SK-N-SH (cell line): ENCODE measurements at regions of chr17 and their contacts with region 1.

Region 1: DNA sequence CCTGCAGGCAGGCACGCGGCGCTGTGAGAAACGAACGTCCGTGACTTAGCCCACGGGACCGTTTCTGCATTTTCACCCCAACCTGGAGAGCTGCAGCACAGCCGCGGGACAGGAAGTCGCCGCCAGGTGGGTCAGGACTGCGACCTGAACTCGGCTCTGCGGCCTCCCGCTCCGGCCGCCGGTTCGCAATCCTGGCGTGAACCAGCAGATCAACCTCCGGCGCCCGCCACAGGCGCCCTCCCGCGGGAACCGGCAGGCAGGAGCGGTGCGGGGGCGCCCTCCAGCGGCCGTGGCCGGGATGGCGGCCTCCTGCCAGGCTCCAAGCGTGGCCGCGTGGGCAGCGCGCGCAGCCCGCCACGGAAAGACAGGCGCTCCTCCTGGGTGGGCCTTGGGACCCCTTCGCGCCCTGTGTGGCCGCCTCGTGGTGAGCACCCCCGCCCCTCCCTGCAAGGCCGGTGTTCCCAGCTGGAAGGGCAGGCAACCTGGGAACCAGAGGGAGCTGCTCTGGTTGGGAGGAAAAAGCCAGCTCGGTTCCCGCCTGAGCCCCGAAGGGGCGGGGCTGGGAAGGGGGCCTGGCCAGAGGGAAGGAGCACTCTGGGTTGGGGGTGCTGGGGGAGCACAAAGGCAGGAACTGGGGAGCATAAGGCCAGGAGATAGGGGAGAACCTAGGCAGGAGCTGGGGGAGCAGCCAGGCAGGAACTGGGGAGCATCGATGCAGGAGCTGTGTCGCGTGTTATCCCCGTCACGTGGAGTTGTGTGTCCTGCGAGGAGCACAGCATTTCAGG is 28.2 kb downstream of the ACTG1 start:
- DNase-seq: peak; percentile 97
- H3K4me3 ChIP-seq: peak overlapping the region; percentile 36 to 61
- H3K27ac ChIP-seq: no peak overlapping the region
- H3K4me1 ChIP-seq: peaks cover 6 to 51% of the 10 kb centered on the region in 2 experiments; a peak in 2 of 4 replicates
- H3K27me3 ChIP-seq: no peaks in the 10 kb centered on the region
- CTCF ChIP-seq: peak; percentile 95
- EP300 ChIP-seq: no peak
- RAD21 ChIP-seq: peak; percentile 98

Region 2: GRCh38 chr17:81322271-81323082 is 161.9 kb before region 1 on chr17:
- CTCF ChIA-PET with region 1: interaction called, 13 read pairs
- POLR2A ChIA-PET with region 1: no interaction called
- DNase-seq: peak; percentile 94
- H3K4me3 ChIP-seq: no peak overlapping the region
- H3K27ac ChIP-seq: peak overlapping the region in 1 of 2 experiments; percentile 83; a peak in 1 of 4 replicates
- H3K4me1 ChIP-seq: peaks cover 0 to 49% of the 10 kb centered on the region in 2 experiments; a peak in 1 of 4 replicates
- H3K27me3 ChIP-seq: no peaks in the 10 kb centered on the region
- CTCF ChIP-seq: peak; percentile 56
- EP300 ChIP-seq: no peak
- RAD21 ChIP-seq: peak; percentile 43

Region 3: DNA sequence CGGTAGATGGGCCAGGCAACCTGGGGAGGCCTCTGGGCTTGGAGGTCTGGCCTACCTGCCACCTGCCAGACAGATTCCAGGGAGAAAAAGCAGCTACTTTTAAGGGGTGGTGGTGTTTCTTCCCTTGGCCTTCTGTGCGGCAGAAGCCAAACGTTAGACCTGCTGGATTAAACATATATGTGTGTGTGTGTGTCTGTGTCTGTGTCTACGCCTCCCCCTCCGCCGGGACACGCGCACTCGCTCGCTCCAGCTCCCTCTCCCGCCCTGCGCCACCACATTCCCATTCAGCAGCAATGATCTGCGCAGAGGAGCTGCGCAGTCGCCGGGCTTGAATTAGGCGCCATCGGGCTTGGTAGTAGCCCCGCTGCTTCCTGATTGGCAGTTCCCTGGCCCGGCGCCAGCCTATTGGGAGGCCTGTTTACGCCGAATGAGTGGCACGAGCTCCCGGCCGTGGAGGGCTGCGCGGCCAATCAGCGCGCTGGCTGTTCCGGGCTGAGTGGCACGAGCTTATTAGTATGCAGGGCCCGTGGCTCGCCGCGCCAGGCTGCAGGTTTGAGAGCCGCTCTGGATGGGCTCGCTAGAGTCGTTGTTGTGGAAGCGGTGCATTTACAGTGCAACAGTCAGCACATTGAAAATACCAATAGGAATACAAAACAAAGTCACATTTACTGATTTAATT is 89.3 kb before region 1 on chr17 and contains the start of gene BAHCC1:
- CTCF ChIA-PET with region 1: interaction called, 60 read pairs
- POLR2A ChIA-PET with region 1: interaction called, 4 read pairs
- DNase-seq: peak; percentile 97
- H3K4me3 ChIP-seq: peak within 1 kb of the TSS; percentile 60 to 80
- H3K27ac ChIP-seq: peak within 1 kb of the TSS; percentile 83 to 89
- H3K4me1 ChIP-seq: peaks cover 31 to 68% of the 10 kb centered on the region in 2 experiments
- H3K27me3 ChIP-seq: no peaks in the 10 kb centered on the region
- CTCF ChIP-seq: no peak
- EP300 ChIP-seq: peak in 1 of 2 experiments; percentile 51; a peak in 1 of 4 replicates
- RAD21 ChIP-seq: no peak; the same call in 1 of the 2 replicates
- polyA plus RNA-seq, gene BAHCC1: 3.6 and 6.4 TPM in 2 replicates

Region 4: GRCh38 chr17:81428948-81429774 is 55.2 kb before region 1 on chr17:
- CTCF ChIA-PET with region 1: interaction called, 43 read pairs
- POLR2A ChIA-PET with region 1: no interaction called
- DNase-seq: peak; percentile 97
- H3K4me3 ChIP-seq: peak overlapping the region in 1 of 2 experiments; percentile 4; a peak in 1 of 4 replicates
- H3K27ac ChIP-seq: peak overlapping the region; percentile 15 to 78; a peak in 3 of 4 replicates
- H3K4me1 ChIP-seq: peaks cover 21 to 51% of the 10 kb centered on the region in 2 experiments; a peak in 3 of 4 replicates
- H3K27me3 ChIP-seq: no peaks in the 10 kb centered on the region
- CTCF ChIP-seq: no peak
- EP300 ChIP-seq: peak in 1 of 2 experiments; percentile 82; a peak in 3 of 4 replicates
- RAD21 ChIP-seq: no peak

Region 5: GRCh38 chr17:81471804-81472456 is 12.5 kb before region 1 on chr17:
- CTCF ChIA-PET with region 1: interaction called, 41 read pairs
- POLR2A ChIA-PET with region 1: no interaction called
- DNase-seq: peak; percentile 97
- H3K4me3 ChIP-seq: peak overlapping the region in 1 of 2 experiments; percentile 7; a peak in 1 of 4 replicates
- H3K27ac ChIP-seq: peak overlapping the region in 1 of 2 experiments; percentile 31; a peak in 2 of 4 replicates
- H3K4me1 ChIP-seq: peaks cover 0 to 17% of the 10 kb centered on the region in 2 experiments; a peak in 1 of 4 replicates
- H3K27me3 ChIP-seq: no peaks in the 10 kb centered on the region
- CTCF ChIP-seq: no peak
- EP300 ChIP-seq: 0 out of 4 replicates have a peak, but pooled peaks of 1 of the 2 experiments have one; percentile 12
- RAD21 ChIP-seq: peak; percentile 43

Region 6: GRCh38 chr17:81537343-81537855 is 53.0 kb after region 1 on chr17:
- CTCF ChIA-PET with region 1: interaction called, 15 read pairs
- POLR2A ChIA-PET with region 1: no interaction called
- DNase-seq: peak; percentile 92
- H3K4me3 ChIP-seq: no peak overlapping the region
- H3K27ac ChIP-seq: no peak overlapping the region
- H3K4me1 ChIP-seq: peaks cover 0 to 35% of the 10 kb centered on the region in 2 experiments; a peak in 1 of 4 replicates
- H3K27me3 ChIP-seq: no peaks in the 10 kb centered on the region
- CTCF ChIP-seq: peak; percentile 60
- EP300 ChIP-seq: no peak
- RAD21 ChIP-seq: peak; percentile 80

Region 7: DNA sequence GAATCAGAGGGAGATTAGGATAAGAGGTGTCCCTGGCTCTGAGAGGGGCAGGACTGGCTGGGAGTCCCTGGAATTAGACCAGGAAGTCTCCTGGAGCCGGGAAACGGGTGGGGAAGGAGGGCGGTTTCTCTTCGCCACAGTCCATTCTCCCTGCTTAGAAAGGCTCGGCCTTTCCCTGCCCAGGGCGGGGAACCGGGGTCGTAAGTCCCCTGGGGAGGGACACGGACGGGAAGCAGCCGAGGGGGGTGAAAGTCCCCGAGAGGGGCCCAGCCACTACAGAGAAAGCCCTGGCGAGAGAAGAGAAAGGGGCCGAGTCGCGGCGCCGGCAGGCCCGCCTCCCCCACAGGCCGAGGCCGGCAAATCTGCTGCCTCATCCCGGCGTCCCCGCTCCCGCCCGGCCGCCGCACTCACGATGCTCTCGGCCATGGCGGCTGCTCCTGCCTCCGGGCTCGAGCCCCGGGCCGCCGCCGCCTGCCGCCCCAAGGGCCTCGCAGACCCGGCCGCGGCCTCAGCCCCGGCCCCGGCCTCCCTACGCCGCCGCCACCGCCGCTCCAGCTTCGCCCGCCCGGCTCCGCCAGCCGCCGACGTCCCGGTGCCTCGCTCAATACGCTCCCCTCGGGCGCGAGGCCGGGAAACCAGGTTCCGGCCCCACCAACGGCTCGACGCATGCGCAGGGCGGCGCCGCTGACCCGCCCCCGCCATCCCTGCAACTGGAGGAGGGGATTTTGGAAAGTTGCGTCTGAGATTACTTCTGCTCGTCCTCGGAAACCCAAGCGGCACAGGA is 152.3 kb after region 1 on chr17 and contains the starts of genes NPLOC4 and TSPAN10:
- CTCF ChIA-PET with region 1: no interaction called
- POLR2A ChIA-PET with region 1: no interaction called
- DNase-seq: peak; percentile 100
- H3K4me3 ChIP-seq: peak within 1 kb of the TSS; percentile 65 to 79
- H3K27ac ChIP-seq: peak within 1 kb of the TSS; percentile 67 to 92
- H3K4me1 ChIP-seq: peaks cover 7 to 17% of the 10 kb centered on the region in 2 experiments; a peak in 3 of 4 replicates
- H3K27me3 ChIP-seq: no peaks in the 10 kb centered on the region
- CTCF ChIP-seq: no peak
- EP300 ChIP-seq: 0 out of 4 replicates have a peak, but pooled peaks have one; percentile 5 to 52
- RAD21 ChIP-seq: no peak; the same call in 1 of the 2 replicates
- polyA plus RNA-seq, gene NPLOC4: 88.6 and 105 TPM in 2 replicates
- polyA plus RNA-seq, gene TSPAN10: 4.7 and 6.0 TPM in 2 replicates